GM10248 (cell line): ENCODE measurements at regions of chr3 and their contacts with region 1.

Region 1: DNA sequence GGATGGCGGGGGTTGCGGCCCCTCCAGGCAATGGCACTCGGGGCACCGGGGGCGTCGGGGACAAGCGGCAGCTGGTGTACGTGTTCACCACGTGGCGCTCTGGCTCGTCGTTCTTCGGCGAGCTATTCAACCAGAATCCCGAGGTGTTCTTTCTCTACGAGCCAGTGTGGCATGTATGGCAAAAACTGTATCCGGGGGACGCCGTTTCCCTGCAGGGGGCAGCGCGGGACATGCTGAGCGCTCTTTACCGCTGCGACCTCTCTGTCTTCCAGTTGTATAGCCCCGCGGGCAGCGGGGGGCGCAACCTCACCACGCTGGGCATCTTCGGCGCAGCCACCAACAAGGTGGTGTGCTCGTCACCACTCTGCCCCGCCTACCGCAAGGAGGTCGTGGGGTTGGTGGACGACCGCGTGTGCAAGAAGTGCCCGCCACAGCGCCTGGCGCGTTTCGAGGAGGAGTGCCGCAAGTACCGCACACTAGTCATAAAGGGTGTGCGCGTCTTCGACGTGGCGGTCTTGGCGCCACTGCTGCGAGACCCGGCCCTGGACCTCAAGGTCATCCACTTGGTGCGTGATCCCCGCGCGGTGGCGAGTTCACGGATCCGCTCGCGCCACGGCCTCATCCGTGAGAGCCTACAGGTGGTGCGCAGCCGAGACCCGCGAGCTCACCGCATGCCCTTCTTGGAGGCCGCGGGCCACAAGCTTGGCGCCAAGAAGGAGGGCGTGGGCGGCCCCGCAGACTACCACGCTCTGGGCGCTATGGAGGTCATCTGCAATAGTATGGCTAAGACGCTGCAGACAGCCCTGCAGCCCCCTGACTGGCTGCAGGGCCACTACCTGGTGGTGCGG is 1.9 kb downstream of the CHST2 start:
- DNase-seq: peak; percentile 69
- CTCF ChIP-seq: peak; percentile 81

Region 2: DNA sequence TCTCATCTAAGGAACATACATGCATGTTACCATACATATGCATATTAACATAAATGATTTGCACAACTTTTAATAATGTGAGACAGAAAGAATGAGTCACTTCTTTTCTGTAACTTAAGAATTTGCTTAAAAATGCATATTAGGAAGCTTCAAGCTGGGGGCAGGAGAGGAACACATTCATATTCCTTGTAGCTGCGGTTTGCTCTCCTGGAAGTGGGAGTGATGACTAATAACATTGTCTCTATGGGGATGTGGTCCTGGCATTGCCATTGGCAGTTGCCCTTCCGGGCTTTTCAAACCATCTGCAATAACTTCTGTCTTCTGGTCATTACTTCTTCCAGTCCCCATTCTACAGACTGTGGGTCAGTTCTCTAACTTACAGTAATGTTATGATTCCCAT is 13.7 kb after region 1 on chr3:
- CTCF ChIA-PET with region 1: interaction called, 18 read pairs
- POLR2A ChIA-PET with region 1: no interaction called
- DNase-seq: no peak
- CTCF ChIP-seq: no peak